B cell (primary cell): ENCODE measurements at regions of chr16 and their contacts with region 1.

Region 1: DNA sequence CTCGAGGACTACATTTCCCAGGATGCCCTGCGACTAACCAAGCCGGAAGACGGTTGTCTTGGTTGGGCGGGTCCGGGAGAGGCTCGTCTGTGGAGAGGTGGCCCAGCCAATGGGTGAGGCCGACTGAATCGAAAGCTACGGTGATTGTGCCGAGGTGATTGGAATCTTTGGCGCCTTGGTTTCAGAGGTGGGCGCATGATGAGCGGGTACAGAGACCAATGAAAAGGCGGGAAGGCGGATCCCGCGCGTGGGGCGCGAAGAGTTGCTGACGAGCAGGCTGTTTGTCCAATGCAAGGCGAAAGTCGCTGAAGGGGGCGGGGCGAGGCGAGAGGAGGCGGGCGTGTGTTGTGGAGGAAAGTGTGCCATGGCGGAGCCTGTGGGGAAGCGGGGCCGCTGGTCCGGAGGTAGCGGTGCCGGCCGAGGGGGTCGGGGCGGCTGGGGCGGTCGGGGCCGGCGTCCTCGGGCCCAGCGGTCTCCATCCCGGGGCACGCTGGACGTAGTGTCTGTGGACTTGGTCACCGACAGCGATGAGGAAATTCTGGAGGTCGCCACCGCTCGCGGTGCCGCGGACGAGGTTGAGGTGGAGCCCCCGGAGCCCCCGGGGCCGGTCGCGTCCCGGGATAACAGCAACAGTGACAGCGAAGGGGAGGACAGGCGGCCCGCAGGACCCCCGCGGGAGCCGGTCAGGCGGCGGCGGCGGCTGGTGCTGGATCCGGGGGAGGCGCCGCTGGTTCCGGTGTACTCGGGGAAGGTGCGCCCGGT is at the start of gene NFATC2IP:
- DNase-seq: peak; percentile 100
- ATAC-seq: peak; percentile 95
- H3K4me3 ChIP-seq: peak within 1 kb of the TSS; percentile 52 to 90 (median 80)
- H3K4me3 Mint-ChIP-seq: peak within 1 kb of the TSS; percentile 90
- H3K27ac ChIP-seq: peak within 1 kb of the TSS; percentile 51 to 79
- H3K27ac Mint-ChIP-seq: peak within 1 kb of the TSS; percentile 88
- H3K4me1 ChIP-seq: peaks cover 10 to 21% of the 10 kb centered on the region in 2 donors
- H3K4me1 Mint-ChIP-seq: peaks cover 30% of the 10 kb centered on the region
- H3K27me3 ChIP-seq: no peaks in the 10 kb centered on the region
- H3K27me3 Mint-ChIP-seq: no peaks in the 10 kb centered on the region
- CTCF ChIP-seq: no peak
- total RNA-seq, gene NFATC2IP: 102 TPM in 2 replicates

Region 2: GRCh38 chr16:28846080-28846932 is 104.5 kb before region 1 on chr16 and contains the start of gene TUFM:
- CTCF ChIA-PET with region 1: interaction called, 38 read pairs
- POLR2A ChIA-PET with region 1: interaction called, 8 read pairs
- intact Hi-C with region 1: no loop called
- DNase-seq: peak; percentile 99
- ATAC-seq: peak; percentile 98
- H3K4me3 ChIP-seq: peak within 1 kb of the TSS; percentile 73 to 98 (median 89)
- H3K4me3 Mint-ChIP-seq: peak within 1 kb of the TSS; percentile 91
- H3K27ac ChIP-seq: peak within 1 kb of the TSS; percentile 80 to 87
- H3K27ac Mint-ChIP-seq: peak within 1 kb of the TSS; percentile 91
- H3K4me1 ChIP-seq: peaks cover 18 to 26% of the 10 kb centered on the region in 2 donors
- H3K4me1 Mint-ChIP-seq: peaks cover 30% of the 10 kb centered on the region
- H3K27me3 ChIP-seq: no peaks in the 10 kb centered on the region
- H3K27me3 Mint-ChIP-seq: no peaks in the 10 kb centered on the region
- CTCF ChIP-seq: peak; percentile 75
- total RNA-seq, gene TUFM: 129 and 143 TPM in 2 replicates

Region 3: GRCh38 chr16:28879841-28880588 is 70.8 kb before region 1 on chr16:
- CTCF ChIA-PET with region 1: interaction called, 83 read pairs
- POLR2A ChIA-PET with region 1: interaction called, 3 read pairs
- intact Hi-C with region 1: no loop called
- DNase-seq: peak; percentile 89
- ATAC-seq: peak; percentile 99
- H3K4me3 ChIP-seq: peak overlapping the region; percentile 53 to 94 (median 87)
- H3K4me3 Mint-ChIP-seq: peak overlapping the region; percentile 92
- H3K27ac ChIP-seq: peak overlapping the region in 1 of 2 donors; percentile 43
- H3K27ac Mint-ChIP-seq: no peak overlapping the region
- H3K4me1 ChIP-seq: peaks cover 13 to 17% of the 10 kb centered on the region in 2 donors
- H3K4me1 Mint-ChIP-seq: peaks cover 15% of the 10 kb centered on the region
- H3K27me3 ChIP-seq: peaks cover 0 to 8% (median 1%) of the 10 kb centered on the region in 4 experiments
- H3K27me3 Mint-ChIP-seq: peaks cover 6% of the 10 kb centered on the region
- CTCF ChIP-seq: no peak

Region 4: GRCh38 chr16:28917095-28917494 is 33.7 kb before region 1 on chr16:
- CTCF ChIA-PET with region 1: interaction called, 114 read pairs
- POLR2A ChIA-PET with region 1: interaction called, 6 read pairs
- intact Hi-C with region 1: no loop called
- DNase-seq: no peak
- ATAC-seq: no peak
- H3K4me3 ChIP-seq: no peak overlapping the region
- H3K4me3 Mint-ChIP-seq: no peak overlapping the region
- H3K27ac ChIP-seq: no peak overlapping the region
- H3K27ac Mint-ChIP-seq: peak overlapping the region; percentile 67
- H3K4me1 ChIP-seq: peaks cover 3 to 13% of the 10 kb centered on the region in 2 donors
- H3K4me1 Mint-ChIP-seq: peaks cover 17% of the 10 kb centered on the region
- H3K27me3 ChIP-seq: no peaks in the 10 kb centered on the region
- H3K27me3 Mint-ChIP-seq: no peaks in the 10 kb centered on the region
- CTCF ChIP-seq: no peak

Region 5: GRCh38 chr16:28974437-28975157 is 23.8 kb after region 1 on chr16 and contains the start of gene SPNS1:
- CTCF ChIA-PET with region 1: interaction called, 13 read pairs
- POLR2A ChIA-PET with region 1: interaction called, 3 read pairs
- intact Hi-C with region 1: loop called (anchors 1 kb)
- DNase-seq: peak; percentile 96
- ATAC-seq: peak; percentile 89
- H3K4me3 ChIP-seq: peak within 1 kb of the TSS; percentile 75 to 95 (median 83)
- H3K4me3 Mint-ChIP-seq: peak within 1 kb of the TSS; percentile 96
- H3K27ac ChIP-seq: peak within 1 kb of the TSS; percentile 65 to 90
- H3K27ac Mint-ChIP-seq: peak within 1 kb of the TSS; percentile 95
- H3K4me1 ChIP-seq: peaks cover 13 to 17% of the 10 kb centered on the region in 2 donors
- H3K4me1 Mint-ChIP-seq: peaks cover 30% of the 10 kb centered on the region
- H3K27me3 ChIP-seq: no peaks in the 10 kb centered on the region
- H3K27me3 Mint-ChIP-seq: no peaks in the 10 kb centered on the region
- CTCF ChIP-seq: no peak
- total RNA-seq, gene SPNS1: 36.4 and 37.8 TPM in 2 replicates

Region 6: DNA sequence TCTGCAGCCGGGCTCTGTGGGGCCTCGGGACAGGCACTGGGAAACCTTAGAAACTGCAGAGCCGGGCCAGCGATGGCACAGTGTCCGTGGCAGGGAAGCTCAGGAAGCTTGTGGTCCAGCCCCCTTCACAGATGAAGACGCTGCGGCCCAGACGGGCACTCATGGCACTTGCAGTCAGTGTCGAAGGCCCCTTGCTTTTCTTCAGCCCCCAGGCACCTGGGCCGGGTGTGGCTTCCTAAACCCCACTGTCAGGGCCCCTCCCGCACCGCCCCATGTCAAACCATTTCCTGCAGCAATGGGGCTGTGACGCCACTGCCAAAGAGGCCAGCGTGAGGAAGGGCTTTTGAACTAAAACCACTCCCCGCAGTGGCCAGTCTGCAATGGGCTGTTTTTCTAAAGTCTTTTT is 198.0 kb after region 1 on chr16:
- CTCF ChIA-PET with region 1: no interaction called
- POLR2A ChIA-PET with region 1: no interaction called
- intact Hi-C with region 1: no loop called
- DNase-seq: peak; percentile 74
- ATAC-seq: peak; percentile 93
- H3K4me3 ChIP-seq: no peak overlapping the region
- H3K4me3 Mint-ChIP-seq: peak overlapping the region; percentile 65
- H3K27ac ChIP-seq: peak overlapping the region in 1 of 2 donors; percentile 15
- H3K27ac Mint-ChIP-seq: peak overlapping the region; percentile 50
- H3K4me1 ChIP-seq: peaks cover 14 to 17% of the 10 kb centered on the region in 2 donors
- H3K4me1 Mint-ChIP-seq: peaks cover 20% of the 10 kb centered on the region
- H3K27me3 ChIP-seq: no peaks in the 10 kb centered on the region
- H3K27me3 Mint-ChIP-seq: no peaks in the 10 kb centered on the region
- CTCF ChIP-seq: no peak